ENCODE measurements at regions of chr5 and their contacts with region 1.

Region 1: DNA sequence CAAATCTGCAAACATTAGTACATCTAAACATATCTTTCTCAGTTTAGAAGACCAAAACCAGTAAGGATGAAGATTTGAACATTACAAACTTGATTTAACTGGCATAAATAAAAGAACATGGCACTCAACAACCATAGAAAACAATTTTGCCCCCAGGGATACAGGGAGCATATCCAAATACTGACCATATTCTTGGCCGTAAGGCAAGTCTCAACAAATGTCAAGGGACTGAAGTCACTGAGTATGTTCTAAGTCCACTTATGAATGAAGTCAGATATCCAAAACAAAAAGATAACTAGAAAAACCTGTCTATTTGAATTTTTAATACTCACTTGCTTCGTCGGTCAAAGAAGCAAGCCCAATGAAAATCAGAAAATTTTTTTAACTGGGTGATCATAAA is 14.1 kb downstream of the FEM1C start:
- DNase-seq: no peak
- ATAC-seq: no peak
- H3K4me3 ChIP-seq: no peak overlapping the region
- H3K4me1 ChIP-seq: peaks cover 34% of the 10 kb centered on the region
- CTCF ChIP-seq: no peak

Region 2: DNA sequence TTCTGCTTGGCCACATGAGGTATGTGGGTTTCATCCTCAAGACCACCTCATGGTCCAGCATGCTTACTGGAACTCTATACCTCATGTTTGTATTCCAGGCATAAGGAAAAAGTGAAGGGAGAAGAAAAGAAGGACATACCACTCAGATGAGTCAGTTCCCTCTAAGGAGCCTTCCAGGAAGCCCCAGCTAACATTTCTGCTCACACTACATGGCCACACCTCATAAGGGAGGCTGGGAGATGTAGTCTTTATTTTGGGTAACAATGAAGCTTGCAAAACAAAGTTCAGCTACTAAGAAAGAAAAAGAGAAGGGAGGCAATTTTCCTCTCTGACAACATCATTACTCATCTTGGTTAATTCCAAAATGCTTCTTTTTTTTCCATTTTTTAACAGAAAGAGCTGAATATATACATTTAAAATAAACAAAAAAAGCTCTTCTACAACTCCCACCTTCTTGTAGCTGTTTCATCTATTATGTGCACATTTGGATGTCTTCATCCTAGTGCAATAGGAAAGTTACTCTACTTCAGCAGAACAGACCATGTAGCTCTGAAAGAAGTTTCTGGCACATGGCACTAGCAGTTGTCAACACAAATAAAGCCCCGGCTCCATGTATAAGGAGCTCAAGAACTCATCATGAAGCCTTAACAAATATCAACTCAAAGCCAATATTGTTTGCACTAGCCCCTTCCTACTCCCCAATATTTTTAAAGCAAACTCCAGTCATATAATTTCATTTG is 110.4 kb before region 1 on chr5:
- intact Hi-C with region 1: loop called in 1 of 2 experiments (anchors 10 kb)
- DNase-seq: no peak
- ATAC-seq: peak; percentile 52
- H3K4me3 ChIP-seq: no peak overlapping the region
- H3K4me1 ChIP-seq: peaks cover 48% of the 10 kb centered on the region
- CTCF ChIP-seq: no peak

Measured in mucosa of descending colon (tissue), 3 donors.